ENCODE measurements at regions of chr14 and their contacts with region 1.

Region 1: DNA sequence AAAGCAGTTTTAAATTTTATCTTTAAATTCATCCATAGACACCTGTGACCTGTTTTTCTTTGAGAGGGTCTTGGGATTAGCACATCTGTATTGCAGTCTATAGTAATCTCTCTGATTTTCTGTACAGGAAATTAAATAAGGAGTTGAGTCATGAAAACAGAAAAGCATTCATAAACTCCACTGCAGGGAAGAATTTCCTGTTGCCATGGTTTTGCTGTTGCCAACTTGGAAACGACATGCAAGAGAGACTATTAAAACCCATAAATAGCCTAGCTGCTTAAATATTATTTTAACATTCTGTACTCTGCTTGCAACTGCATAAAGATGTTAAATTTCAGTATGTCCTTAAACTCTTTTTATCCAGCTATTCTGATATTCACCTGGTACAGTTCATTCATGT is 281.0 kb upstream of the RGS6 start:
- DNase-seq: peak; percentile 73
- ATAC-seq: peak; percentile 60
- H3K4me3 ChIP-seq: no peak overlapping the region
- H3K27ac ChIP-seq: peak overlapping the region; percentile 31
- H3K4me1 ChIP-seq: peaks cover 50% of the 10 kb centered on the region
- H3K27me3 ChIP-seq: no peaks in the 10 kb centered on the region
- CTCF ChIP-seq: no peak

Region 2: GRCh38 chr14:71574976-71575375 is 76.3 kb before region 1 on chr14:
- CTCF ChIA-PET with region 1: no interaction called
- POLR2A ChIA-PET with region 1: interaction called, 3 read pairs
- intact Hi-C with region 1: loop called (anchors 5 kb)
- DNase-seq: peak; percentile 89
- ATAC-seq: peak; percentile 90
- H3K4me3 ChIP-seq: peak overlapping the region; percentile 13; the same call in 1 of the 2 replicates
- H3K27ac ChIP-seq: no peak overlapping the region
- H3K4me1 ChIP-seq: peaks cover 30% of the 10 kb centered on the region
- H3K27me3 ChIP-seq: no peaks in the 10 kb centered on the region
- CTCF ChIP-seq: no peak

Region 3: DNA sequence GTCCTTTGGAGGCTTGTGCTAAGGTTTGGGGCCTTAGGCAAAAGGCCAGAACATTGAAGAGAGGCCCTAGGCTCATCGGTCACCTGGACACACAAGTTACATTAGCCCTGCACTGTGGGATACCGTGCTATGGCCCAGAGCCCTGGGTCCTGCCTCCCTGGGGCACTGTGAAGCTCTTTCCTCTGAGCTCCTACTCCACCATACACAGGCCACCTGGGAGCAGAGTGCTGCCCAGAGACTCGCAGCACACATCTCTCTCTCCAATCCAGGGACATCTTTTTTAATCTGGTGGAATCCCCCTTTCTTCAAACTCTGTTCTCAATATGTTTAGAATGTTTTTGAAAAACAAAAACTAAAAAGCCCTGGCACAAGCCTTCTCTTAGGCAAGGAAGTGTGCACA is 33.2 kb before region 1 on chr14:
- CTCF ChIA-PET with region 1: no interaction called
- POLR2A ChIA-PET with region 1: no interaction called
- intact Hi-C with region 1: loop called (anchors 5 kb)
- DNase-seq: no peak
- ATAC-seq: no peak
- H3K4me3 ChIP-seq: no peak overlapping the region
- H3K27ac ChIP-seq: no peak overlapping the region
- H3K4me1 ChIP-seq: peaks cover 35% of the 10 kb centered on the region
- H3K27me3 ChIP-seq: no peaks in the 10 kb centered on the region
- CTCF ChIP-seq: no peak

Region 4: GRCh38 chr14:71625891-71626701 is 25.1 kb before region 1 on chr14:
- CTCF ChIA-PET with region 1: no interaction called
- POLR2A ChIA-PET with region 1: no interaction called
- intact Hi-C with region 1: loop called (anchors 1 kb)
- DNase-seq: no peak
- ATAC-seq: no peak
- H3K4me3 ChIP-seq: no peak overlapping the region
- H3K27ac ChIP-seq: no peak overlapping the region
- H3K4me1 ChIP-seq: peaks cover 23% of the 10 kb centered on the region
- H3K27me3 ChIP-seq: no peaks in the 10 kb centered on the region
- CTCF ChIP-seq: no peak

Region 5: DNA sequence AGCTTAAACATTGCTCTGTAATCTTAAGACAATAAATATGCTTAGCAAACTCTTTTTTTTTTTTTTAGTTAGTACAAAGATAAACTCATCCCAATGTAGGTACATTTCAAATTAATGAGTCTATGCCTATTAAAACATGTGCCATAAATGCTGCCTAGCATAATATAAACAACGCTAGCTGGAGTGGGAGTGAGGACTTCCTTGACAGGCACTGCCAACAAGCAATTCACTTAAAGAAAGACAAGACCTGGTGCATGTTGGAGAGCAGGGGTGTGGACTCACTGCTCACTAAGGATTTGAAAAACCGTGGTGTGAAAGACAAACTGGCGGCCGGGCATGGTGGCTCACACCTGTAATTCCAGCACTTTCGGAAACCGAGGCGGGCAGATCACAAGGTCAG is 93.8 kb after region 1 on chr14:
- CTCF ChIA-PET with region 1: no interaction called
- POLR2A ChIA-PET with region 1: no interaction called
- intact Hi-C with region 1: loop called (anchors 2 kb)
- DNase-seq: no peak
- ATAC-seq: peak; percentile 69
- H3K4me3 ChIP-seq: no peak overlapping the region
- H3K27ac ChIP-seq: no peak overlapping the region
- H3K4me1 ChIP-seq: no peaks in the 10 kb centered on the region; the same call in 1 of the 2 replicates
- H3K27me3 ChIP-seq: no peaks in the 10 kb centered on the region
- CTCF ChIP-seq: no peak

Region 6: GRCh38 chr14:71837671-71838070 is 186.4 kb after region 1 on chr14:
- CTCF ChIA-PET with region 1: no interaction called
- POLR2A ChIA-PET with region 1: no interaction called
- intact Hi-C with region 1: no loop called
- DNase-seq: no peak
- ATAC-seq: no peak
- H3K4me3 ChIP-seq: no peak overlapping the region
- H3K27ac ChIP-seq: no peak overlapping the region
- H3K4me1 ChIP-seq: 0 out of 2 replicates have a peak, but pooled peaks cover 5% of the 10 kb centered on the region
- H3K27me3 ChIP-seq: 0 out of 2 replicates have a peak, but pooled peaks cover 7% of the 10 kb centered on the region
- CTCF ChIP-seq: no peak

Measured in PC-3 (cell line).